ENCODE measurements at regions of chr7 and their contacts with region 1.

Region 1: DNA sequence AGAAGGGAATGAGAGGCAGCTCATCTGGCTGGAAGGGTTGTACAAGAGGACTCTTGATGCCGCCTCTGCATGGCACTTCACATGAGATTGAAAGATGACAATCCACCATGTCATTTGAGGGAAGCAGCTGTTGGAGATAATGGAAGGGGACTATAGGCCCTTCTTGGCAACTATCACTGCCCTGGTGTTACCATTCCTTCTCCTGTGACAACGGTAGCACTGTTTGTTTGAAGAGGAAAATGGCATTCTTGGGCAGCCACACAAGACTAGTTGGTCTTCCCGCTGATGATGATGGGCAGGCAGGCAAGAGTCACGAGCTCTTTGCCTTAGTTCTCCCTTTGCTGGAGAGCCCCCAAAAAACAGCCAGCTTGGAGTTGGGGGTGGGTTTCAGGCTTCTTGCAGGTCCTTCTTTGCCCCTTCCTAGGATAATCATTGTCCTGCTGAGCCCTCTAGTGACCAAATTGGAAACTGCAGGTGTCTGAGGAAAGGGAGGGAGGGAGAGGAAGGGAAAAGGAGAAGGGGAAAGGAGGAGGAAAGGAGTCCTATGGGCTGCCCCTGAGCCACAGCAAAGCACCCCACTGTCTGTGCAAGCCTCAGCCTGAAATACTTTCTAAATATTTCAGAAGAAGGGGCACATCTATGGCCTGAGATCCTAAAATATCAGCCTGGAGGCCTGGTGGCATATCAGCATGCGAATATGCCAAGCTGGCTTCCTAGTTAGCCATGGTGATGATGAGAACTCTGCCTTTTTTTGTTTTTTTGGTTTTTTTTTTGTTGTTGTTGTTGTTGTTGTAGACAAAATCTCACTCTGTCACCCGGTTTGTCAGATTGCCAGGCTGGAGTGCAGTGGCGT is 165.6 kb upstream of the KMT2E start:
- DNase-seq: peak; percentile 38 to 49
- ATAC-seq: peak; percentile 83 to 90
- H3K4me3 ChIP-seq: no peak overlapping the region
- H3K27ac ChIP-seq: no peak overlapping the region
- H3K4me1 ChIP-seq: no peaks in the 10 kb centered on the region
- CTCF ChIP-seq: peak; percentile 80
- EP300 ChIP-seq: no peak
- POLR2A ChIP-seq: no peak
- RAD21 ChIP-seq: peak; percentile 82 to 89

Region 2: DNA sequence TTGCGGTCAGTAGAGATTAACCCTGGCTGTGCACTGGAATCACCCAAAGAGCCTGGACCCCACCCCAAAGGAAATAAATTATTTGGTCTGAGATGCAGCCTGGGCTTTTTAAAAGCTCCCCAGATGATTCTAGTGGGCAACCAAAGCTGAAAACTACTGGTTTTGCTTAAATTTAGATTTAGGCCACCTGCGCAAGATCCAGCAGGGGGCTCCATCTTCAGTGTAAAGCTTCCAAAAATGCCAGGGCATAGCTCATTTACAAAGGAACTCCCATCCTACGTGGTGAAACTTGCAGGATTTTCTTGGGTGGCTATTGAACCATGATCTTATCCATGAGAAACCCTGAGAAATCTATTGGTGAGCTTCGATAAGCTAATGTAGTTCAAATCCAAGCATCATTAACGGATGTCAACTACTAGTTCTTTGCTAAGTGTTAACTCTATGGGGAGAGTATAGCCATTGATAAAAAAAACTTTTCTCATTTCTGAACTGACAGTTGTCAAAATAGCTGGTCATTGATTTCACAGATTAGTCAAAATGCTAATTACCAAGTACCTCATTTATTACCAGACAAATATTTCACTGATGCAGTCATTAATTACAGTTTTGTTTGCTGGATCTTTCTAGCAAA is 204.7 kb before region 1 on chr7:
- CTCF ChIA-PET with region 1: interaction called, 37 read pairs
- POLR2A ChIA-PET with region 1: no interaction called
- DNase-seq: peak; percentile 9 to 15
- ATAC-seq: peak in 1 of 2 experiments; percentile 68; a peak in 4 of 6 replicates
- H3K4me3 ChIP-seq: no peak overlapping the region
- H3K27ac ChIP-seq: no peak overlapping the region
- H3K4me1 ChIP-seq: no peaks in the 10 kb centered on the region
- CTCF ChIP-seq: peak; percentile 41
- EP300 ChIP-seq: no peak
- POLR2A ChIP-seq: no peak
- RAD21 ChIP-seq: peak; percentile 34 to 50; a peak in 4 of 5 replicates

Region 3: DNA sequence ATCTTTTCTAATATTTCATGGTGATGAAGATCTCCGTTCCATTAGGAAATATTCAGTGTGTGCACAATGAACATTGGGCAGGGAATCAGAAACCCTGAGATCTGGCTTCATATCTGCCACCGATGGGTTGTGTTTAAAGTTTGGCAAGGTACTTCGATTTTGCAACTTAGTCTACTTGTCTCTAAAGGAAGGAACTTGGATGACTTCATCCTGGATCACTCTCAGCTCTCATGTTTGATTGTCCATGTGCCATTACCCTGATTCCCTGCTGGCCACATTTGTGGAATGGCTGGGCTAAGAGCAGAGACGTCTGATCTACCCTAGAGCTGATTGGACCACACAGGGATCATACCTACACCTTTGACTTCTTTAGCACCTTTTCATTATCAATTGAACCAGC is 11.4 kb before region 1 on chr7:
- CTCF ChIA-PET with region 1: interaction called, 11 read pairs
- POLR2A ChIA-PET with region 1: no interaction called
- DNase-seq: no peak
- ATAC-seq: no peak
- H3K4me3 ChIP-seq: no peak overlapping the region
- H3K27ac ChIP-seq: no peak overlapping the region
- H3K4me1 ChIP-seq: no peaks in the 10 kb centered on the region
- CTCF ChIP-seq: no peak
- EP300 ChIP-seq: no peak
- POLR2A ChIP-seq: no peak
- RAD21 ChIP-seq: no peak

Region 4: GRCh38 chr7:104862719-104863118 is 14.4 kb after region 1 on chr7:
- CTCF ChIA-PET with region 1: interaction called, 32 read pairs
- POLR2A ChIA-PET with region 1: no interaction called
- DNase-seq: peak; percentile 42 to 50
- ATAC-seq: peak; percentile 92 to 96
- H3K4me3 ChIP-seq: no peak overlapping the region
- H3K27ac ChIP-seq: no peak overlapping the region
- H3K4me1 ChIP-seq: no peaks in the 10 kb centered on the region
- CTCF ChIP-seq: peak; percentile 35
- EP300 ChIP-seq: no peak
- POLR2A ChIP-seq: no peak
- RAD21 ChIP-seq: peak; percentile 14 to 30; a peak in 1 of 5 replicates